ENCODE measurements at regions of chr14 and their contacts with region 1.

Region 1: DNA sequence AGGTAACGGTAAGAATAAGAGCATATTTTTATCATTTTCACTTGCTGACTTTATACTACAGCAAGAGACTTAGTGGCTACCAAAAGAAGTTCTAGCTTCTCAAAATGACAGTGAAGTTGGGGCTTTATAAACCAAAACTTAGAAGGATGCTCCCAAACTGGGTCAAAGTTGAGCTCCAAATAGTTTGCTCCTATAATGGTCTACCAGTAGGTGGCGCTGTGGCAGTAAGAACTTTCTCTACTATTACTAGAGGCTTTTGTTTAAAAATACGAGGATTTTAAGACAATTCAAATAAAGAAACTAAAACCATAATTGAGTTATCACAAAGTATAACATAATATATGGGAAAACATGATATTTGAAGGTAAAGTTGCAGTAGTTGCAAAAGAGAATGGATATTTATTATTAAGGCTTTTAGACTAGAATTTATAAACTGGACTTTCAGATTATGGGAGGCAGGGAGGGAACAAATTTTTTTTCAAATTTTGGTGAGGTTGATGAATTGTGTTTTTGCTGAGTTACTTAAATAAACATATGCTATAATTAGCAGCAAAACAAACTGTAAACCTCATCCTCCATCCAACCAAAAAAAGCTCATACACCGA is 75.0 kb downstream of the TGFB3 start:
- DNase-seq: peak; percentile 89
- H3K4me3 Mint-ChIP-seq: no peak overlapping the region
- H3K27ac Mint-ChIP-seq: no peak overlapping the region
- H3K4me1 Mint-ChIP-seq: no peaks in the 10 kb centered on the region
- H3K27me3 Mint-ChIP-seq: no peaks in the 10 kb centered on the region

Region 2: DNA sequence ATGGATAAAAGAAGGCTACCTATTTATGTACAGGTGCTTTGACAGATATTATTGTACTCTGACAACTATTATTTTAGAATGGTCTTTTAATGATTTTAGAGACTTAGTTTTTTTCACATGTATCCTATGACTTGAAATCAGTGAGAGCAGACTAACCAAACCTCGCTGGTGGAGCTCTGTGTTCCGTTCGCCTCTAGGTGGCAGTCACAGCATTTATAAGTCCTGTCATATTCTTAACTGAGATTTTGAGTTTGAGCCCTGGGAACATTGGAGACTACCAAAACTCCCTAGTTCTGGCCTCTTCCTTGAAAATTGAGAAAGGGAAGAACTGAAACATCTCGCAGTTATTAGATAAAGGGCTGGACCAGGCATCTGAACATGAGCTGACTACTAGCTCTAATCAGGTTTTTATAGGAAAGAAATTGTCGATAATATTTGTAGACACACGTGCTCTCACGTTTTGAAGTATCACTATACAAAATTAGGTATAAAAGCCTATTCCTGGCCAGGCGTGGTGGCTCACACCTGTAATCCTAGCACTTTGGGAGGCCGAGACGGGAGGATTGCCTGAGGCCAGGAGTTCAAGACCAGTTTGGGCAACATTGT is 197.5 kb before region 1 on chr14:
- intact Hi-C with region 1: loop called (anchors 2 kb)
- DNase-seq: peak; percentile 88
- H3K4me3 Mint-ChIP-seq: no peak overlapping the region
- H3K27ac Mint-ChIP-seq: no peak overlapping the region
- H3K4me1 Mint-ChIP-seq: no peaks in the 10 kb centered on the region
- H3K27me3 Mint-ChIP-seq: no peaks in the 10 kb centered on the region

Measured in activated CD4-positive, alpha-beta T cell treated with anti-CD3 and anti-CD28 coated beads, Interleukin-2, amount 10 ng/mL, durations not matched to agents 24 days and 14 days (primary cell).